ENCODE measurements at regions of chr6 and their contacts with region 1.

Region 1: GRCh38 chr6:73285674-73286283 is 22.8 kb upstream of the KHDC1 start:
- DNase-seq: peak; percentile 46 to 67 (median 67)
- H3K4me3 ChIP-seq: no peak overlapping the region
- H3K27ac ChIP-seq: no peak overlapping the region
- H3K4me1 ChIP-seq: no peaks in the 10 kb centered on the region
- H3K27me3 ChIP-seq: no peaks in the 10 kb centered on the region

Region 2: GRCh38 chr6:73236147-73236750 is 49.5 kb before region 1 on chr6:
- CTCF ChIA-PET with region 1: no interaction called
- POLR2A ChIA-PET with region 1: no interaction called
- DNase-seq: no peak
- H3K4me3 ChIP-seq: no peak overlapping the region
- H3K27ac ChIP-seq: no peak overlapping the region
- H3K4me1 ChIP-seq: no peaks in the 10 kb centered on the region
- H3K27me3 ChIP-seq: no peaks in the 10 kb centered on the region

Region 3: GRCh38 chr6:73309769-73310502 is 24.2 kb after region 1 on chr6:
- CTCF ChIA-PET with region 1: interaction called, 17 read pairs
- POLR2A ChIA-PET with region 1: no interaction called
- DNase-seq: peak in 2 of 3 donors; percentile 52 to 73
- H3K4me3 ChIP-seq: peak overlapping the region; percentile 71 to 97 (median 85)
- H3K27ac ChIP-seq: peak overlapping the region; percentile 7 to 74
- H3K4me1 ChIP-seq: peaks cover 0 to 24% (median 17%) of the 10 kb centered on the region in 4 experiments
- H3K27me3 ChIP-seq: peaks cover 0 to 7% (median 4%) of the 10 kb centered on the region in 5 experiments

Region 4: GRCh38 chr6:73329201-73329600 is 43.4 kb after region 1 on chr6:
- CTCF ChIA-PET with region 1: interaction called, 67 read pairs
- POLR2A ChIA-PET with region 1: no interaction called
- DNase-seq: no peak
- H3K4me3 ChIP-seq: no peak overlapping the region
- H3K27ac ChIP-seq: no peak overlapping the region
- H3K4me1 ChIP-seq: no peaks in the 10 kb centered on the region
- H3K27me3 ChIP-seq: peaks cover 0 to 12% (median 0%) of the 10 kb centered on the region in 5 experiments

Region 5: DNA sequence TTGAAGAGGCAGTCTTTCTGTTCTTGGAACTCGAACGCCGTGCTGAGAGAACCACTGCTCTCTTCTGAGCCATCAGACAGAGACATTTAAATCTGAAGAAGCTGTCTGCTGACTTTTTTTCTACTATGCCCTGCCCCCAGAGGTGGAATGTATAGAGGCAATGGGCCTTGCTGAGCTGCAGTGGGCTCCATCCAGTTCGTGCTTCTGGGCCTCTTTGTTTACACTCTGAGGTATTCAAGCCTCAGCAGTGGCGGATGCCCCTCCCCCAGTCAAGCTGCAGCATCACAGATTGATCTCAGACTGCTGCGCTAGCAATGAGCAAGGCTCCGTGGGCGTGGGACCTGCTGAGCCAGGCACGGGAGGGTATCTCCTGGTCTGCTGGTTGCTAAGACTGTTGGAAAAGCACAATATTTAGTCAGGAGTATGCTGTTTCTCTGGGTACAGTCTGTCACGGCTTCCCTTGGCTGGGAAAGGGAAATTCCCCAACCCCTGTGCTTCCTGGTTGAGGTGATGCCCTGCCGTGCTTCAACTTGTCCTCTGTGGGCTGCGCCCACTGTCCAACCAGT is 937.1 kb after region 1 on chr6:
- CTCF ChIA-PET with region 1: no interaction called
- POLR2A ChIA-PET with region 1: no interaction called
- DNase-seq: no peak
- H3K4me3 ChIP-seq: no peak overlapping the region
- H3K27ac ChIP-seq: no peak overlapping the region
- H3K4me1 ChIP-seq: no peaks in the 10 kb centered on the region
- H3K27me3 ChIP-seq: no peaks in the 10 kb centered on the region